Activated naive CD4-positive, alpha-beta T cell treated with anti-CD3 and anti-CD28 coated beads for 36 hours (primary cell): ENCODE measurements at regions of chr13 and their contacts with region 1.

Region 1: GRCh38 chr13:111066544-111066943 is 48.6 kb upstream of the ARHGEF7 start:
- DNase-seq: no peak
- H3K4me3 Mint-ChIP-seq: peak overlapping the region; percentile 44
- H3K27ac Mint-ChIP-seq: no peak overlapping the region
- H3K4me1 Mint-ChIP-seq: peaks cover 4% of the 10 kb centered on the region
- H3K27me3 Mint-ChIP-seq: peaks cover 43% of the 10 kb centered on the region

Region 2: GRCh38 chr13:111202745-111203144 is 136.2 kb after region 1 on chr13:
- CTCF ChIA-PET with region 1: interaction called, 13 read pairs
- intact Hi-C with region 1: no loop called
- DNase-seq: peak; percentile 51
- H3K4me3 Mint-ChIP-seq: no peak overlapping the region
- H3K27ac Mint-ChIP-seq: peak overlapping the region; percentile 50
- H3K4me1 Mint-ChIP-seq: peaks cover 54% of the 10 kb centered on the region
- H3K27me3 Mint-ChIP-seq: no peaks in the 10 kb centered on the region

Region 3: GRCh38 chr13:111210544-111211469 is 144.3 kb after region 1 on chr13:
- CTCF ChIA-PET with region 1: interaction called, 40 read pairs
- intact Hi-C with region 1: no loop called
- DNase-seq: no peak
- H3K4me3 Mint-ChIP-seq: no peak overlapping the region
- H3K27ac Mint-ChIP-seq: no peak overlapping the region
- H3K4me1 Mint-ChIP-seq: peaks cover 37% of the 10 kb centered on the region
- H3K27me3 Mint-ChIP-seq: no peaks in the 10 kb centered on the region

Region 4: GRCh38 chr13:111216166-111216960 is 149.8 kb after region 1 on chr13:
- CTCF ChIA-PET with region 1: interaction called, 40 read pairs
- intact Hi-C with region 1: no loop called
- DNase-seq: peak; percentile 62
- H3K4me3 Mint-ChIP-seq: no peak overlapping the region
- H3K27ac Mint-ChIP-seq: no peak overlapping the region
- H3K4me1 Mint-ChIP-seq: peaks cover 27% of the 10 kb centered on the region
- H3K27me3 Mint-ChIP-seq: no peaks in the 10 kb centered on the region

Region 5: DNA sequence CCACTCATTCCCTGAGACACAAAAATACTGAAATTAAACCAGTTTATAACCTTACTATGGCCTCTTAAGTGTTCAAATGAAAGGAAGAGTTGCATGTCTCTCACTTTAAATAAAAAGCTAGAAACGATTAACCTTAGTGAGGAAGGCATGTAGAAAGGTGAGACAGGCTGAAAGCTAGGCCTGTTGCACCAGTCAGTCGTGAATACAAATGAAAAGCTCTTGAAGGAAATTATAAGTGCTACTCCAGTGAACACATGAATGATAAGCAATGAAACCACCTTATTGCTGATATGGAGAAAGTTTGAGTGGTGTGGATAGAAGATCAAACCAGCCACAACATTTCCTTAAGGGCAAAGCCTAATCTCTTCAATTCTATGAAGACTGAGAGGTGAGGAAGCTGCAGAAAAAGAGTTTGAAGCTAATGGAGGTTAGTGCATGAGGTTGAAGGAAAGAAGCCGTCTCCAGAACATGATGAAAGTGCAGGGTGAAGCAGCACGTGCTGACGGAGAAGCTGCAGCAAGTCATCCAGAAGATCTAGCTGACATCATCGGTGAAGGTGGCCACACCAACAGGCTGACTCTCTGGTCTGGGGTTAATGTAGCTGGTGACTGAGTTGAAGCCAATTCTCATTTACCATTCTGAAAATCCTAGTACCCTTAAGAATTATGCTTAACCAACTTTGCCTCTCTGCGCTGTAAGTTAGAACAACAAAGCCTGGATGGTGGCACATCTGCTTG is 159.4 kb after region 1 on chr13:
- CTCF ChIA-PET with region 1: interaction called, 46 read pairs
- intact Hi-C with region 1: loop called (anchors 1 kb)
- DNase-seq: no peak
- H3K4me3 Mint-ChIP-seq: no peak overlapping the region
- H3K27ac Mint-ChIP-seq: no peak overlapping the region
- H3K4me1 Mint-ChIP-seq: peaks cover 29% of the 10 kb centered on the region
- H3K27me3 Mint-ChIP-seq: no peaks in the 10 kb centered on the region

Region 6: DNA sequence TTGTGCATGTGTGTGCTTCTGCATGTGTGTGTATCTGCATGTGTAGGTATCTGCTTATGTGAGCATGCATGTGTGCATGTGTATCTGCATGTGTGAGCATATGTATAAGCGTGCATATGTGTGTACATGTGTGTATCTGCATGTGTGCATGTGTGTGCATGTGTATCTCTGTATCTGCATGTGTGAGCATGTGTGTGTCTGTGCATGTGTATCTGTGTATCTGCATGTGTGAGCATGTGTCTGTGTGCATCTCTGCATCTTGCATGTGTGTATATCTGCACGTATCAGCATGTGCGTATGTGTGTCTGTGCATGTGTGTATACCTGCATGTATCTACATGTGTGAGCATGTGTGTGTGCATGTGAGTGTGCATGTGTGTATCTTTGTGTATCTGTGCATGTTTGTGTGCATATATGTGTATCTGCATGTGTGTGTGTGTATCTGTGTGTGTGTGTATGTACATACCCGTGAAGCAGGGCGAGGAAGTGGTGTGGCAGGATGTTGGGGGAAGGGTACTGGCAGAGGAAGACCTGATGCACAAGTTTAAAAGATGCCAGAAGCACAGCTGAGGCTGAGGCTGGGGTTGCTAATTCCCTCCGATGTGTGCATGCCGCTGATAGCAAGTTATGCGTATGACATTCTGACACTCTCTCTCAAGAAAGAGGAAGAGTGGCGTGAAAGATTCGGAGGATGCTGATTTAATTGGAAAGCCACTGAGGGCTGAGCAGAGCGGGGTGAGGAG is 318.1 kb after region 1 on chr13:
- CTCF ChIA-PET with region 1: no interaction called
- intact Hi-C with region 1: loop called (anchors 10 kb)
- DNase-seq: peak; percentile 56
- H3K4me3 Mint-ChIP-seq: peak overlapping the region; percentile 26
- H3K27ac Mint-ChIP-seq: no peak overlapping the region
- H3K4me1 Mint-ChIP-seq: peaks cover 34% of the 10 kb centered on the region
- H3K27me3 Mint-ChIP-seq: no peaks in the 10 kb centered on the region